Activated CD8-positive, alpha-beta T cell treated with anti-CD3 and anti-CD28 coated beads, Interleukin-2, amount 10 ng/mL, durations not matched to agents 7 days and 5 days (primary cell): ENCODE measurements at regions of chr1 and their contacts with region 1.

Region 1: GRCh38 chr1:89125913-89126580 is at the start of gene GBP2:
- DNase-seq: peak; percentile 35
- ATAC-seq: peak; percentile 70
- H3K4me3 Mint-ChIP-seq: peak within 1 kb of the TSS; percentile 93
- H3K27ac Mint-ChIP-seq: peak within 1 kb of the TSS; percentile 99
- H3K4me1 Mint-ChIP-seq: peaks cover 62% of the 10 kb centered on the region
- H3K27me3 Mint-ChIP-seq: no peaks in the 10 kb centered on the region
- total RNA-seq, gene GBP2: 95.8 to 97.4 TPM

Region 2: GRCh38 chr1:88935522-88936222 is 190.4 kb before region 1 on chr1:
- CTCF ChIA-PET with region 1: no interaction called
- POLR2A ChIA-PET with region 1: no interaction called
- DNase-seq: peak; percentile 29
- ATAC-seq: no peak
- H3K4me3 Mint-ChIP-seq: no peak overlapping the region
- H3K27ac Mint-ChIP-seq: no peak overlapping the region
- H3K4me1 Mint-ChIP-seq: peaks cover 2% of the 10 kb centered on the region
- H3K27me3 Mint-ChIP-seq: no peaks in the 10 kb centered on the region

Region 3: GRCh38 chr1:89022167-89022959 is 103.7 kb before region 1 on chr1 and contains the start of gene GBP3:
- CTCF ChIA-PET with region 1: no interaction called
- POLR2A ChIA-PET with region 1: interaction called, 12 read pairs
- DNase-seq: peak; percentile 37
- ATAC-seq: peak; percentile 79
- H3K4me3 Mint-ChIP-seq: peak within 1 kb of the TSS; percentile 79
- H3K27ac Mint-ChIP-seq: peak within 1 kb of the TSS; percentile 82
- H3K4me1 Mint-ChIP-seq: peaks cover 43% of the 10 kb centered on the region
- H3K27me3 Mint-ChIP-seq: no peaks in the 10 kb centered on the region
- total RNA-seq, gene GBP3: 16.7 to 18.9 TPM

Region 4: DNA sequence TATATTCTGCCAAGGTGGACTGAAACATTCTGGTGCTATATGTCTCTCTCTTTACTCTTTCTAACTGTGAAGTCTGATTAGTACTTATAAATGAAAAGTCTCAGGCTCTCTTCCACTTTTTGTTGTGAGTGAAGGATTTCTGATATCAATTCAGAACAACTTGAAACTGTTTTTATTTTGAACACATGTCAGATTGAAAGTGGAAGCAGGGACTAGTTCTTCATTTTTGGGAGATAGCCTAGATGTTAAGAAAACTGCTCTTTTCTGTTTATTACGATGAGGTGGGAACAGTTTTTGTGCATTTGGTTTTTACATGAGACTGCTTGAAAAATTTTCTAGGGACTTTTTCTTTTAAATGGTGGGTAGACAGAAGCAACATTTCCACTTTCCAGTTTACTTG is 88.9 kb before region 1 on chr1:
- CTCF ChIA-PET with region 1: no interaction called
- POLR2A ChIA-PET with region 1: no interaction called
- DNase-seq: no peak
- ATAC-seq: no peak
- H3K4me3 Mint-ChIP-seq: no peak overlapping the region
- H3K27ac Mint-ChIP-seq: no peak overlapping the region
- H3K4me1 Mint-ChIP-seq: peaks cover 16% of the 10 kb centered on the region
- H3K27me3 Mint-ChIP-seq: no peaks in the 10 kb centered on the region

Region 5: GRCh38 chr1:89114662-89115061 is 11.4 kb before region 1 on chr1:
- CTCF ChIA-PET with region 1: interaction called, 5 read pairs
- POLR2A ChIA-PET with region 1: interaction called, 13 read pairs
- DNase-seq: no peak
- ATAC-seq: peak; percentile 28
- H3K4me3 Mint-ChIP-seq: no peak overlapping the region
- H3K27ac Mint-ChIP-seq: no peak overlapping the region
- H3K4me1 Mint-ChIP-seq: peaks cover 11% of the 10 kb centered on the region
- H3K27me3 Mint-ChIP-seq: no peaks in the 10 kb centered on the region

Region 6: GRCh38 chr1:89261926-89262515 is 136.0 kb after region 1 on chr1:
- CTCF ChIA-PET with region 1: interaction called, 5 read pairs
- POLR2A ChIA-PET with region 1: interaction called, 19 read pairs
- DNase-seq: no peak
- ATAC-seq: no peak
- H3K4me3 Mint-ChIP-seq: peak overlapping the region; percentile 65
- H3K27ac Mint-ChIP-seq: peak overlapping the region; percentile 40
- H3K4me1 Mint-ChIP-seq: peaks cover 79% of the 10 kb centered on the region
- H3K27me3 Mint-ChIP-seq: no peaks in the 10 kb centered on the region

Region 7: DNA sequence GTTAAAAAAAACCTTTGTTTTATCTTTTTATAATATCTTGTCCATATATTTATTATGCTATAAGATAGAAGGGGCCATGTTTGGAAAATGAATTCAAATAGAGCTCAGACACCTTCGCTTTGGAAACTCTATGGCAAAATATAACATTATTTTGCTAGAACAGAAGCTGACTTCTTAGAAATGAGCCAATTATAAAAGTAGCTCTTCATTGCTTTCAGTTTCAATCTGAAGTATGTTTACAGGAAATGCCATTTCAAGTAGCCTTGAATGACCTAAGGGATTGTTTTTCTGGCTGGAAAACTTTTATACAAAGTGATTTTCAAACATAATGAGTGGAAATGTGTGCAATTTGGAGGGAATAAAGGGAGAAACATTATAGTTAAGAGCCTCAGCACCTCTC is 184.5 kb after region 1 on chr1:
- CTCF ChIA-PET with region 1: interaction called, 5 read pairs
- POLR2A ChIA-PET with region 1: interaction called, 15 read pairs
- DNase-seq: no peak
- ATAC-seq: peak; percentile 78
- H3K4me3 Mint-ChIP-seq: peak overlapping the region; percentile 60
- H3K27ac Mint-ChIP-seq: peak overlapping the region; percentile 93
- H3K4me1 Mint-ChIP-seq: peaks cover 57% of the 10 kb centered on the region
- H3K27me3 Mint-ChIP-seq: no peaks in the 10 kb centered on the region